ENCODE measurements at regions of chr11 and their contacts with region 1.

Region 1: DNA sequence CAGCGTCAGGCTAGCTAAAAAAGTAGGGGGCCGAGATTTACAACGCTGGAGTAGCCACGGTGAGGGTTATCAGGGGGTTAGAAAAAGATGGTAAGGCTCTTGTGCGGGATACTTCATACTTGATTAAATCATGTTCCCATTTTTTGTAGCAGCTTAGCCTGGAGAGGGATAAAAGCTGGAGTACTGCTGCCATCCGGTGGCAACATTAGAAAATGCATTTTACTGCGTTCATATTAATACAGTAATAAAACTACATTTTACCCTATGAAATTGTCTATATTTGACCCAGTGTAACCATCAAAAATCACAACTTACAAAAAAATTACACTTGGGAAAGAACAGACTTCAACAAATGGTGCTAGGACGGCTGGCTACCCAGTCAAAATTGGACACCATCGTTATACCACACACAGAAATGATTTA is 17.3 kb downstream of the RPUSD4 start:
- DNase-seq: no peak
- H3K4me3 ChIP-seq: no peak overlapping the region
- H3K27ac ChIP-seq: no peak overlapping the region
- H3K4me1 ChIP-seq: no peaks in the 10 kb centered on the region
- H3K27me3 ChIP-seq: no peaks in the 10 kb centered on the region
- CTCF ChIP-seq: peak; percentile 57 to 74 (median 61)

Region 2: GRCh38 chr11:125923012-125923579 is 271.0 kb before region 1 on chr11:
- intact Hi-C with region 1: loop called (anchors 1 kb)
- DNase-seq: no peak
- H3K4me3 ChIP-seq: no peak overlapping the region
- H3K27ac ChIP-seq: no peak overlapping the region
- H3K4me1 ChIP-seq: no peaks in the 10 kb centered on the region
- H3K27me3 ChIP-seq: no peaks in the 10 kb centered on the region
- CTCF ChIP-seq: peak; percentile 71 to 81 (median 76)

Region 3: GRCh38 chr11:125941619-125942611 is 252.2 kb before region 1 on chr11:
- intact Hi-C with region 1: loop called (anchors 5 kb)
- DNase-seq: no peak
- H3K4me3 ChIP-seq: no peak overlapping the region
- H3K27ac ChIP-seq: no peak overlapping the region
- H3K4me1 ChIP-seq: no peaks in the 10 kb centered on the region
- H3K27me3 ChIP-seq: no peaks in the 10 kb centered on the region
- CTCF ChIP-seq: peak in 2 of 3 experiments; percentile 16 to 48

Region 4: GRCh38 chr11:126072141-126072741 is 121.9 kb before region 1 on chr11:
- intact Hi-C with region 1: no loop called
- DNase-seq: no peak
- H3K4me3 ChIP-seq: no peak overlapping the region
- H3K27ac ChIP-seq: no peak overlapping the region
- H3K4me1 ChIP-seq: no peaks in the 10 kb centered on the region
- H3K27me3 ChIP-seq: no peaks in the 10 kb centered on the region
- CTCF ChIP-seq: no peak

Measured in ascending aorta (tissue), 2 donors.